ENCODE measurements at regions of chr16 and their contacts with region 1.

Region 1: DNA sequence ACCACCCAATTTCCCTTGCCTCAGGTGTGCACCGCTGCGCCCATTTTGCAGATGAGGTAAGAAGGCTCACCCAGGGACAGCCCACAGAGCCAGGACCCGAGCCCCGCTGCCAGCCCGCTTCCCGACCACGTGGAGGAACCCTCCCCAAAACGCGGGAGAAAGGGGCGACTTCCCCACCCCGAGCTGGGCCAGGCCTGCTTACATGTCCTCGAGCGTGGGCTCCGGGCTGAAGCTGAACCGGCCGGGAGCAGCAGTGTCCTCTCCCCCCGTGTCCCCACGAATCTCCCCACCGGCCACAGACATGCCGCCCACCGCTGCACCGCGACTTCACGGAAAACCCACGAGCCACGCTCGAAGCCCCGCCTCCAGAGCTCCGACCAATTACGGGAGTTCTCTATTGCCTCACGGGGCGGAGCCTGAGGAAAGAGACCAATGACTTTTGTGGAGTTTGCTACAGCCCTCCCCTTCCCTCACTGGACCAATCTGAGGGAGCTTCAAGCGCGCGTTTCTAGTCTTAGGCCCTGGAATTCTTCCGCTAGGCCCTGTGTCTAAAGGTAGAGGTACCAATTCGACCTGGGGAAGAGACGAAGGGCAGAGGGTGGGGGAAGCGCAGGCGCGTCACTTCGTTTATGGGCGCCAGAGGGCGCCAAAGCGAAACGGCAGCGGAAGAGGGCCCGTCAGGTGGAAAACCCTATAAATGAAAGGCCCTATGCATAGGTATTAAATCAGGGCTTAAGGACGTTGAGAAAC is at the start of gene DCTPP1:
- DNase-seq: peak; percentile 99
- ATAC-seq: peak; percentile 98
- H3K4me3 ChIP-seq: peak within 1 kb of the TSS; percentile 93
- H3K27ac ChIP-seq: peak within 1 kb of the TSS; percentile 81
- H3K4me1 ChIP-seq: peaks cover 13% of the 10 kb centered on the region
- H3K27me3 ChIP-seq: no peaks in the 10 kb centered on the region
- CTCF ChIP-seq: peak; percentile 85 to 92 (median 90)
- EP300 ChIP-seq: 0 out of 4 replicates have a peak, but pooled peaks of 1 of the 2 experiments have one; percentile 30
- POLR2A ChIP-seq: peak; percentile 84
- RAD21 ChIP-seq: peak; percentile 78
- polyA plus RNA-seq, gene DCTPP1: 76.6 to 162 TPM

Region 2: DNA sequence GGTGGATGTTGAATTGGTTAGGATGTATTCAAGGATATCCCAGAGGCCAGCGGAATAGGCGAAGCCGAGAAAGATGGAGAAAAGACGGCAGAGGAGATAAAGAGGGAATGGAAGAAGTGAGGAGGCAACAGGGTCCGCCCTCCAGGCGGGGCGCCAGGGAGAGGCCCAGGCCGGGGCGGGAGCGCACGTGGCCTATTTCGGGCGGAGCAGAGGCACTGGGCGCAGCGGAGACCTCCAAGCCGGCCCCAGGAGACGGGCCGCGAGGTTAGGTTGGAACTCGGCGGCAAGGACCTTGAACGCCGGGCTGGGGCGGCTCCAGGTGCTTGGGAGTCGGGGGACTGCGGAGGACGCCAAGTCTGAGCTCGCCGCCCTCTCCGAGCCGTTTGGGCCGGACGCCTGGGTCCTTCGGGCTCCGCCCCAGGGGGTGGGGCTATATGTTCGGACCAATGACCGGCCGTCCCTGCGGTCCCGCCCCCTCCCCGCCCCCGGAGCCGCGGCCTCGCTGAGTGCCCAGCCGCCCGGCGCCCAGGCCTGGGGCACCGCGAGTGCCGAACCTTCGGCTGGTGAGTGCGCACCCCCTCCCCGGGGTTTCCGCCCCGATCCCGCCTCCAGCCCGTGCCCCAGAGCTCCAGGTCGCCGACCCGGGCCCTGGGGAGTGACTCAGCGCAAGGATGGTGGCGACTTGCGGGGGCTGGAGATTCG is 22.6 kb before region 1 on chr16 and contains the start of gene ZNF771:
- CTCF ChIA-PET with region 1: interaction called, 16 read pairs
- POLR2A ChIA-PET with region 1: interaction called, 4 read pairs
- RAD21 ChIA-PET with region 1: interaction called, 7 read pairs
- SMC1A ChIA-PET with region 1: interaction called, 7 read pairs
- in situ Hi-C with region 1: no loop called
- intact Hi-C with region 1: no loop called
- DNase-seq: no peak
- ATAC-seq: peak; percentile 93
- H3K4me3 ChIP-seq: peak within 1 kb of the TSS; percentile 83
- H3K27ac ChIP-seq: no peak within 1 kb of the TSS
- H3K4me1 ChIP-seq: peaks cover 14% of the 10 kb centered on the region
- H3K27me3 ChIP-seq: no peaks in the 10 kb centered on the region; a peak in 1 of 4 replicates
- CTCF ChIP-seq: peak in 1 of 3 experiments; percentile 21; a peak in 1 of 6 replicates
- EP300 ChIP-seq: no peak
- POLR2A ChIP-seq: peak; percentile 82
- RAD21 ChIP-seq: no peak
- polyA plus RNA-seq, gene ZNF771: 0.98 to 2.0 TPM

Region 3: DNA sequence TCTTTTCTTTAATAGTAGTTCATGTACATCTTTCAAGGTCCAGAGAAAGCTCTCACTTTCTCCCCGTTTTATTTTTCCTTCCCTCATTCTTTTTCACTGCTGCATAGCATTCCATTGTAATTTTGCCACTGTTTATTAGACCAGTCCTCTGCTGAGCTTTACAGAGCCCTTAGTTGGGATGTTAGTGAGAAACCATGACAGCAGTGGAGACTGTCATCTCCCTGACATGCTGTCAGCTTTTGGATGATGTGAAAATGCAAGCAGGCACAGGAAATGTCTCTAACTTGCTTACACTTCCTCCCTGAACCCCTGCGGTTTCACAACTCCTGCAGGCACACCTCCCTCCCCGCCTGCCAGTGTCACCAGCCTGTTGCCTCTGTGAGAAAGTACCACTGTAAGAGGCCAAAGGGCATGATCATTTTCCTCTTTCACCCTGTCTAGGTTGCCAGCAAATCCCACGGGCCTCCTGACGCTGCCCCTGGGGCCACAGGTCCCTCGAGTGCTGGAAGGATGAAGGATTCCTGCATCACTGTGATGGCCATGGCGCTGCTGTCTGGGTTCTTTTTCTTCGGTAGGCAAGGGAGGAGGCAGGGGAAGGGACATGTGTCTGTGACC is 42.6 kb after region 1 on chr16 and contains the start of gene ITGAL:
- CTCF ChIA-PET with region 1: interaction called, 36 read pairs
- POLR2A ChIA-PET with region 1: interaction called, 12 read pairs
- RAD21 ChIA-PET with region 1: interaction called, 53 read pairs
- SMC1A ChIA-PET with region 1: interaction called, 40 read pairs
- in situ Hi-C with region 1: no loop called
- intact Hi-C with region 1: loop called (anchors 1 kb)
- DNase-seq: peak; percentile 98
- ATAC-seq: peak; percentile 67
- H3K4me3 ChIP-seq: peak within 1 kb of the TSS; percentile 96
- H3K27ac ChIP-seq: peak within 1 kb of the TSS; percentile 90
- H3K4me1 ChIP-seq: peaks cover 40% of the 10 kb centered on the region
- H3K27me3 ChIP-seq: no peaks in the 10 kb centered on the region
- CTCF ChIP-seq: no peak
- EP300 ChIP-seq: peak; percentile 86 to 95; a peak in 3 of 4 replicates
- POLR2A ChIP-seq: peak; percentile 81
- RAD21 ChIP-seq: peak; percentile 3; the same call in 1 of the 2 replicates
- polyA plus RNA-seq, gene ITGAL: 10.7 to 12.1 TPM

Region 4: GRCh38 chr16:30571695-30572600 is 142.1 kb after region 1 on chr16 and contains the start of gene ZNF688:
- CTCF ChIA-PET with region 1: interaction called, 8 read pairs
- POLR2A ChIA-PET with region 1: interaction called, 4 read pairs
- RAD21 ChIA-PET with region 1: interaction called, 17 read pairs
- SMC1A ChIA-PET with region 1: interaction called, 3 read pairs
- in situ Hi-C with region 1: no loop called
- intact Hi-C with region 1: no loop called
- DNase-seq: peak; percentile 95
- ATAC-seq: peak; percentile 89
- H3K4me3 ChIP-seq: peak within 1 kb of the TSS; percentile 81
- H3K27ac ChIP-seq: peak within 1 kb of the TSS; percentile 93
- H3K4me1 ChIP-seq: peaks cover 26% of the 10 kb centered on the region
- H3K27me3 ChIP-seq: no peaks in the 10 kb centered on the region
- CTCF ChIP-seq: no peak
- EP300 ChIP-seq: no peak
- POLR2A ChIP-seq: peak; percentile 65
- RAD21 ChIP-seq: no peak
- polyA plus RNA-seq, gene ZNF688: 0.14 to 0.88 TPM

Region 5: GRCh38 chr16:30615358-30616091 is 185.7 kb after region 1 on chr16:
- CTCF ChIA-PET with region 1: interaction called, 19 read pairs
- POLR2A ChIA-PET with region 1: interaction called, 4 read pairs
- RAD21 ChIA-PET with region 1: interaction called, 29 read pairs
- SMC1A ChIA-PET with region 1: interaction called, 16 read pairs
- in situ Hi-C with region 1: no loop called
- intact Hi-C with region 1: no loop called
- DNase-seq: no peak
- ATAC-seq: peak; percentile 82
- H3K4me3 ChIP-seq: no peak overlapping the region
- H3K27ac ChIP-seq: no peak overlapping the region
- H3K4me1 ChIP-seq: no peaks in the 10 kb centered on the region
- H3K27me3 ChIP-seq: no peaks in the 10 kb centered on the region
- CTCF ChIP-seq: peak; percentile 72 to 75 (median 74)
- EP300 ChIP-seq: no peak
- POLR2A ChIP-seq: no peak
- RAD21 ChIP-seq: peak; percentile 72

Region 6: GRCh38 chr16:30698139-30698815 is 268.4 kb after region 1 on chr16:
- CTCF ChIA-PET with region 1: interaction called, 10 read pairs
- POLR2A ChIA-PET with region 1: no interaction called
- RAD21 ChIA-PET with region 1: interaction called, 5 read pairs
- SMC1A ChIA-PET with region 1: interaction called, 4 read pairs
- in situ Hi-C with region 1: no loop called
- intact Hi-C with region 1: no loop called
- DNase-seq: peak; percentile 89
- ATAC-seq: peak; percentile 82
- H3K4me3 ChIP-seq: peak overlapping the region; percentile 78
- H3K27ac ChIP-seq: peak overlapping the region; percentile 98
- H3K4me1 ChIP-seq: peaks cover 10% of the 10 kb centered on the region
- H3K27me3 ChIP-seq: no peaks in the 10 kb centered on the region
- CTCF ChIP-seq: no peak
- EP300 ChIP-seq: peak in 1 of 2 experiments; percentile 57; a peak in 1 of 4 replicates
- POLR2A ChIP-seq: peak; percentile 95
- RAD21 ChIP-seq: no peak